ENCODE measurements at regions of chr11 and their contacts with region 1.

Region 1: GRCh38 chr11:125111343-125112207 is at the start of gene TMEM218:
- DNase-seq: peak; percentile 95
- H3K4me3 Mint-ChIP-seq: peak within 1 kb of the TSS; percentile 94
- H3K27ac Mint-ChIP-seq: peak within 1 kb of the TSS; percentile 95
- H3K4me1 Mint-ChIP-seq: peaks cover 17% of the 10 kb centered on the region
- H3K27me3 Mint-ChIP-seq: peaks cover 2% of the 10 kb centered on the region
- total RNA-seq, gene TMEM218: 14.6 and 18.0 TPM in 2 replicates

Region 2: GRCh38 chr11:124739479-124740276 is 371.9 kb before region 1 on chr11 and contains the start of gene NRGN:
- intact Hi-C with region 1: loop called (anchors 2 kb)
- DNase-seq: peak; percentile 80
- H3K4me3 Mint-ChIP-seq: peak within 1 kb of the TSS; percentile 85
- H3K27ac Mint-ChIP-seq: peak within 1 kb of the TSS; percentile 54
- H3K4me1 Mint-ChIP-seq: peaks cover 25% of the 10 kb centered on the region
- H3K27me3 Mint-ChIP-seq: peaks cover 38% of the 10 kb centered on the region
- total RNA-seq, gene NRGN: 3.9 and 6.1 TPM in 2 replicates

Region 3: GRCh38 chr11:124837491-124837856 is 274.1 kb before region 1 on chr11:
- intact Hi-C with region 1: loop called (anchors 1 kb)
- DNase-seq: no peak
- H3K4me3 Mint-ChIP-seq: no peak overlapping the region
- H3K27ac Mint-ChIP-seq: no peak overlapping the region
- H3K4me1 Mint-ChIP-seq: peaks cover 17% of the 10 kb centered on the region
- H3K27me3 Mint-ChIP-seq: peaks cover 59% of the 10 kb centered on the region

Region 4: DNA sequence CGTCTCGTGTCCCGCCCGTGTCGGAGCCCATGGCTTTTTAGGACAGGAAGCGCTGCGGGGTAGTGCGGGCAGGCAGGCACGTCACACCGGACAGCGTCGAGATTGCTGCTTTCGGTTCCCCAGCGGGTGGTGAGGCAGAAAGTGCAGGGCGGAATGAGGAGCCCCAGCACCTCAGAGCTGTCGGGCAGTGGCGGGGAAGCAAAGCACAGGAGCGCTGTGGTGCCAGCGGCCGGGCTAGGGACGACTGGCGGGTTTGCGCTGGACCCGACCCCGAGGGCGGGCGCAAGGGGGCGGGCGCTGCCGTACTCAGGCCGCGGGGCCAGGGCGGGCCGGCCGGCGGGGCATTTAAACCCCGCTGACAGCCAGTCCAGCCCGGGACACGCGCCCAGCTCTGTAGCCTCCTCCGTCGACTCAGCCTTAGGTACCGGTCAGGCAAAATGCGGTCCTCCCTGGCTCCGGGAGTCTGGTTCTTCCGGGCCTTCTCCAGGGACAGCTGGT is 48.6 kb before region 1 on chr11 and contains the start of gene SLC37A2:
- intact Hi-C with region 1: loop called (anchors 1 kb)
- DNase-seq: peak; percentile 40
- H3K4me3 Mint-ChIP-seq: peak within 1 kb of the TSS; percentile 80
- H3K27ac Mint-ChIP-seq: no peak within 1 kb of the TSS
- H3K4me1 Mint-ChIP-seq: peaks cover 10% of the 10 kb centered on the region
- H3K27me3 Mint-ChIP-seq: peaks cover 44% of the 10 kb centered on the region
- total RNA-seq, gene SLC37A2: 0.13 and 0.17 TPM in 2 replicates

Region 5: DNA sequence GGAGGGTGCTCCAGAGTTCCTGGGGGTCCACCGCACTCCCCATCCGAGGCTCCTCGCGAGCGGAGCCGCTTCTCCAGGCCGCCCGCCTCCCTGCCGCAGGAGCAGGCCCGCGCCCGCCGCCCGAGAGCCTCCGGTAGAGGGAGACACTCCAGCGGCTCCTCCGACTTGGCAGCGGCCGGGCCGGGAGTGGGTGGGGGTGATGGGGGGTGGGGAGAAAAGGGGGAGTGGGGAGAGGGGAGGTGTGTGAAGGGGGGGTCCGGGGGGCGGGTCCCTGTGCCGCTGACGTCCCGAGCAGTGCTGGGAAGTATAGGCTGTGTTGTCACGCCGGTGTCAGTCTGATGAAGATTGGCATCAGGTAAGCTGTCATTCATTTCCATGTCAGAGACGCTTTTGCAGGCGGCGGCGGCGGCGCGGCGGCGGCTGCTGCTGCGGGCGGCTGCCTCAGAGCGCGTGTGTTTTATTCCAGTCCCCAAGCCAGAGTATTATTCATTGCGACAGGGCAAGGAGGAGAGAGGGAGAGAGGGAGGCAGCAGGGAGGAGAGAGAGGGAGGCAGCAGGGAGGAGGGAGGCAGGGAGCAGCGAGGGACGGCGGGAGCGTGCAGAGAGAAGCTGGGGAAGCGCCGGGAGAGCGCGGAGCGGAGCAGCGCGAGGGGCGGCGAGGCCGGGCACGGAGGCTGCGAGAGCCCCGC is 53.0 kb after region 1 on chr11 and contains the start of gene PKNOX2:
- intact Hi-C with region 1: loop called (anchors 1 kb)
- DNase-seq: peak; percentile 39
- H3K4me3 Mint-ChIP-seq: peak within 1 kb of the TSS; percentile 91
- H3K27ac Mint-ChIP-seq: no peak within 1 kb of the TSS
- H3K4me1 Mint-ChIP-seq: peaks cover 16% of the 10 kb centered on the region
- H3K27me3 Mint-ChIP-seq: peaks cover 65% of the 10 kb centered on the region
- total RNA-seq, gene PKNOX2: not detected in 2 replicates

Region 6: GRCh38 chr11:125180413-125181305 is 69.1 kb after region 1 on chr11:
- intact Hi-C with region 1: no loop called
- DNase-seq: no peak
- H3K4me3 Mint-ChIP-seq: no peak overlapping the region
- H3K27ac Mint-ChIP-seq: no peak overlapping the region
- H3K4me1 Mint-ChIP-seq: no peaks in the 10 kb centered on the region
- H3K27me3 Mint-ChIP-seq: peaks cover 17% of the 10 kb centered on the region

Region 7: GRCh38 chr11:125887373-125888324 is 776.1 kb after region 1 on chr11 and contains the start of gene HYLS1:
- intact Hi-C with region 1: loop called (anchors 1 kb)
- DNase-seq: peak; percentile 99
- H3K4me3 Mint-ChIP-seq: peak within 1 kb of the TSS; percentile 82
- H3K27ac Mint-ChIP-seq: peak within 1 kb of the TSS; percentile 97
- H3K4me1 Mint-ChIP-seq: peaks cover 35% of the 10 kb centered on the region
- H3K27me3 Mint-ChIP-seq: peaks cover 6% of the 10 kb centered on the region
- total RNA-seq, gene HYLS1: 6.5 and 6.8 TPM in 2 replicates

Region 8: GRCh38 chr11:126211235-126212088 is 1099.9 kb after region 1 on chr11 and contains the starts of genes FAM118B and RPUSD4:
- intact Hi-C with region 1: loop called (anchors 5 kb)
- DNase-seq: peak; percentile 98
- H3K4me3 Mint-ChIP-seq: peak within 1 kb of the TSS; percentile 99
- H3K27ac Mint-ChIP-seq: peak within 1 kb of the TSS; percentile 98
- H3K4me1 Mint-ChIP-seq: peaks cover 34% of the 10 kb centered on the region
- H3K27me3 Mint-ChIP-seq: no peaks in the 10 kb centered on the region
- total RNA-seq, gene FAM118B: 13.2 and 16.4 TPM in 2 replicates
- total RNA-seq, gene RPUSD4: 49.2 and 49.8 TPM in 2 replicates

Measured in activated T-helper 1 cell treated with anti-CD3 and anti-CD28 coated beads, Interleukin-12 subunit alpha, Interleukin-12 subunit beta, Interleukin-2, Interleukin-4 antibody, amounts not matched to agents 30 ng/mL and 10 ng/mL and 1 ng/mL, durations not matched to agents 14 hours and 24 hours and 36 hours (primary cell).